ENCODE measurements at regions of chr3 and their contacts with region 1.

Region 1: GRCh38 chr3:115092220-115092791 is 54.8 kb downstream of the ZBTB20 start:
- DNase-seq: peak; percentile 70
- H3K4me3 ChIP-seq: no peak overlapping the region
- H3K27ac ChIP-seq: no peak overlapping the region
- H3K4me1 ChIP-seq: no peaks in the 10 kb centered on the region
- H3K27me3 ChIP-seq: no peaks in the 10 kb centered on the region
- CTCF ChIP-seq: peak; percentile 29 to 77
- POLR2A ChIP-seq: no peak

Region 2: DNA sequence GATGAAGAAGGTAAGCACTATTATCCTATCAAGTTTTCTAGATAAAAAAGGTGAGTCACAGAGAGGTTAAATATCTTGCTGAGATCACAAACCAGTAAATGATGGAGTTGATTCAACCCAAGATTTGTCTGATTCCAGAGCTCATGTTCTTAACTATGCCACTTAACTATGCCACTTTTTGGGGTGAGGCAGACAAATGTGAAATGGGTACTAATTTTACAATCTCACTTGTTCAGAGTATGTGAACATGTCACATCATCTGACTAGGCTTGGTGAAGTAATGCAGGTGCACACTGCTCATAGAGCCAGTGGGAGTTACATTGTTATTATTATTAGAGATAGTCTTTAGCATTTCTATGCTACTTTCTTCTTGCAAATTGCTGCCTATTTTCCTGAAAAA is 915.4 kb before region 1 on chr3:
- CTCF ChIA-PET with region 1: no interaction called
- POLR2A ChIA-PET with region 1: no interaction called
- dilution Hi-C with region 1: no loop called
- intact Hi-C with region 1: no loop called
- DNase-seq: no peak
- H3K4me3 ChIP-seq: no peak overlapping the region
- H3K27ac ChIP-seq: no peak overlapping the region
- H3K4me1 ChIP-seq: no peaks in the 10 kb centered on the region
- H3K27me3 ChIP-seq: peaks cover 12 to 13% of the 10 kb centered on the region in 2 experiments
- CTCF ChIP-seq: no peak
- POLR2A ChIP-seq: no peak

Region 3: GRCh38 chr3:114362815-114363214 is 729.5 kb before region 1 on chr3:
- CTCF ChIA-PET with region 1: interaction called, 14 read pairs
- POLR2A ChIA-PET with region 1: no interaction called
- dilution Hi-C with region 1: no loop called
- intact Hi-C with region 1: no loop called
- DNase-seq: peak; percentile 29
- H3K4me3 ChIP-seq: no peak overlapping the region
- H3K27ac ChIP-seq: no peak overlapping the region
- H3K4me1 ChIP-seq: no peaks in the 10 kb centered on the region
- H3K27me3 ChIP-seq: no peaks in the 10 kb centered on the region
- CTCF ChIP-seq: peak; percentile 2 to 18
- POLR2A ChIP-seq: no peak

Region 4: DNA sequence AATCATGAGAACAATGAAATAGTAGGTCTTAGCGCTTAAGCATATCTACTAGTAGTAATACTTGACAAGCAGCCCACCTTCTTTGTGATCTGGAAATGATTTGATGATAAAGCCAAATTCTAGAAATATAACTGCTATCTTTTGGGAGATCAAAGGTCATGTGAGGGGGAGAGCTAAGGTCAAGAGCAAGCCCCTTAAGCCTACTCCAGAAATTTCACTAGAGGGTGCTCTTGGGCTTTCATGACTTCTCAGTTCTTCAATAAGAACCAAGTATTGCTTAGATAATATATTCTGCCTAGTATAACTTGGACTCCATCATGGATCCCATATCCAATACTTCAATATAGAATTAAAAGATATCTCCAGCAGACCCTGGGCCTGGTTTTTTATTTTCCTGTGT is 264.8 kb before region 1 on chr3:
- CTCF ChIA-PET with region 1: interaction called, 5 read pairs
- POLR2A ChIA-PET with region 1: no interaction called
- dilution Hi-C with region 1: no loop called
- intact Hi-C with region 1: loop called (anchors 1 kb)
- DNase-seq: peak; percentile 47
- H3K4me3 ChIP-seq: no peak overlapping the region
- H3K27ac ChIP-seq: no peak overlapping the region
- H3K4me1 ChIP-seq: no peaks in the 10 kb centered on the region
- H3K27me3 ChIP-seq: no peaks in the 10 kb centered on the region
- CTCF ChIP-seq: peak; percentile 18 to 45
- POLR2A ChIP-seq: no peak

Region 5: DNA sequence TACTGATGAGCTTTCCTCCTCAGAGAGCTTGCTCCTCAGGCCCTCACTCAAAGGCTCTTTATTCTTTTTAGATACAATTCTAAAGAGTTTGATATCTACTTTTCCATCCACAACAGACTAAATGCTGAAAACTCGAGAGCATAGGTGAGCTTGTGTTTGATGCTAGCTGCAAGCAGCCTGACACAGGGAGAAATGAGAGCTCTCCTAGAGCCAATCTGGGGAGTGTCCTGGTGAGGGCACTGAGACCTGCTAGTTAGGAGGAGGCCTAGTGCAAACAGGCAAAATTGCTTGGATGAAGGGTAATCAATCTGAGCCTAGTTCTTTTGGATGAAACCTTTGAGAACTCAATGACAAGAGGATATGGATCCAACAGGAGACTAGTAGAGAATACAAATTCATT is 246.1 kb before region 1 on chr3:
- CTCF ChIA-PET with region 1: no interaction called
- POLR2A ChIA-PET with region 1: no interaction called
- dilution Hi-C with region 1: no loop called
- intact Hi-C with region 1: no loop called
- DNase-seq: no peak
- H3K4me3 ChIP-seq: no peak overlapping the region
- H3K27ac ChIP-seq: no peak overlapping the region
- H3K4me1 ChIP-seq: no peaks in the 10 kb centered on the region
- H3K27me3 ChIP-seq: no peaks in the 10 kb centered on the region
- CTCF ChIP-seq: no peak
- POLR2A ChIP-seq: no peak

Region 6: GRCh38 chr3:115169808-115170207 is 77.5 kb after region 1 on chr3:
- CTCF ChIA-PET with region 1: interaction called, 21 read pairs
- POLR2A ChIA-PET with region 1: no interaction called
- dilution Hi-C with region 1: no loop called
- intact Hi-C with region 1: loop called (anchors 1 kb)
- DNase-seq: no peak
- H3K4me3 ChIP-seq: no peak overlapping the region
- H3K27ac ChIP-seq: no peak overlapping the region
- H3K4me1 ChIP-seq: no peaks in the 10 kb centered on the region
- H3K27me3 ChIP-seq: no peaks in the 10 kb centered on the region
- CTCF ChIP-seq: no peak
- POLR2A ChIP-seq: no peak

Region 7: GRCh38 chr3:115814778-115815380 is 722.6 kb after region 1 on chr3:
- CTCF ChIA-PET with region 1: no interaction called
- POLR2A ChIA-PET with region 1: no interaction called
- dilution Hi-C with region 1: no loop called
- intact Hi-C with region 1: loop called (anchors 1 kb)
- DNase-seq: peak; percentile 71
- H3K4me3 ChIP-seq: no peak overlapping the region
- H3K27ac ChIP-seq: no peak overlapping the region
- H3K4me1 ChIP-seq: no peaks in the 10 kb centered on the region
- H3K27me3 ChIP-seq: peaks cover 10 to 11% of the 10 kb centered on the region in 2 experiments
- CTCF ChIP-seq: peak; percentile 76 to 93
- POLR2A ChIP-seq: no peak